AG04450 (cell line): ENCODE measurements at regions of chr18 and their contacts with region 1.

Region 1: GRCh38 chr18:45722899-45723298 is 1.1 kb upstream of the SLC14A1 start:
- DNase-seq: peak; percentile 42
- H3K4me3 ChIP-seq: no peak overlapping the region
- H3K27ac ChIP-seq: no peak overlapping the region
- H3K27me3 ChIP-seq: no peaks in the 10 kb centered on the region
- CTCF ChIP-seq: peak; percentile 88

Region 2: DNA sequence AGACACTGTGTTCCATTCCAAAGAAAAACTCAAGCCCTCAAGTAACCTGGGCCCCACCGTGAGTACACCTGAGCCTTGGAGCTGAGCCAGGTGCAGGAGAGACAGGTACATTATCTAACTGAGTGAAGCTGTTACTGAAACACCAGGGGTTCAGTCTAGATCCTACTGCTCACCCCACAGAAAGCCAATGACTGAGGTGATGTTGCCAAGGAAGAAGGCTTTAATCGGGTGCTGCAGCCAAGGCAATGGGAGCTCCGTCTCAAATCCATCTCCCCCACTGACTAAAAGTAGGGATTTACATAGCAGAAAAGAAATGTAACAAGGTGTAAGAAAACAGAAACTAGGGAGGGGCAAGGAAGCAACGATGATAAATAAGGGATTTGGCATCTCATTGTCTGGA is 14.1 kb before region 1 on chr18:
- CTCF ChIA-PET with region 1: interaction called, 12 read pairs
- POLR2A ChIA-PET with region 1: no interaction called
- DNase-seq: no peak
- H3K4me3 ChIP-seq: no peak overlapping the region
- H3K27ac ChIP-seq: no peak overlapping the region
- H3K27me3 ChIP-seq: no peaks in the 10 kb centered on the region
- CTCF ChIP-seq: no peak

Region 3: DNA sequence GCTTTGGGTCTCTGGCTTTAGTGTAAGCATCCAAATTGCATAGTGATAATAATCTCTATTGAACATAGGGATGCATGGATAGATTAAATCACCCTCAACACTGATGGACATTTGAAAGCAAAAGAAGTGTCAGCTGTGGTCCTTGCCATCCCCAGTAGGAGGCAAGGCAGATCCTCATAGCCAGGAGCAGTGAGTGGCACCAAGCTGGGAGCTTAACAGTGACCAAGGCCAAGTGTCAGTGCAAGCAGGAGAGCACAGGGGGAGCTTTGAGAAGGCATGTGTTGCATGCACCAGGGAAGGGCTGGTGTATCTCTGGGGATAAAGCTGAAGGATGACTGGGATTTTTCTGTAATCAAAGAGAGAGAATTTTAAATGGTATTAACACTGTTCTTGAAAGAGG is 15.8 kb after region 1 on chr18:
- CTCF ChIA-PET with region 1: interaction called, 10 read pairs
- POLR2A ChIA-PET with region 1: no interaction called
- DNase-seq: no peak
- H3K4me3 ChIP-seq: no peak overlapping the region
- H3K27ac ChIP-seq: no peak overlapping the region
- H3K27me3 ChIP-seq: no peaks in the 10 kb centered on the region
- CTCF ChIP-seq: 0 out of 2 replicates have a peak, but pooled peaks have one; percentile 13

Region 4: GRCh38 chr18:45775241-45775676 is 52.4 kb after region 1 on chr18:
- CTCF ChIA-PET with region 1: interaction called, 13 read pairs
- POLR2A ChIA-PET with region 1: no interaction called
- DNase-seq: no peak
- H3K4me3 ChIP-seq: peak overlapping the region; percentile 51
- H3K27ac ChIP-seq: peak overlapping the region; percentile 43
- H3K27me3 ChIP-seq: no peaks in the 10 kb centered on the region
- CTCF ChIP-seq: no peak